ENCODE measurements at regions of chr10 and their contacts with region 1.

Region 1: DNA sequence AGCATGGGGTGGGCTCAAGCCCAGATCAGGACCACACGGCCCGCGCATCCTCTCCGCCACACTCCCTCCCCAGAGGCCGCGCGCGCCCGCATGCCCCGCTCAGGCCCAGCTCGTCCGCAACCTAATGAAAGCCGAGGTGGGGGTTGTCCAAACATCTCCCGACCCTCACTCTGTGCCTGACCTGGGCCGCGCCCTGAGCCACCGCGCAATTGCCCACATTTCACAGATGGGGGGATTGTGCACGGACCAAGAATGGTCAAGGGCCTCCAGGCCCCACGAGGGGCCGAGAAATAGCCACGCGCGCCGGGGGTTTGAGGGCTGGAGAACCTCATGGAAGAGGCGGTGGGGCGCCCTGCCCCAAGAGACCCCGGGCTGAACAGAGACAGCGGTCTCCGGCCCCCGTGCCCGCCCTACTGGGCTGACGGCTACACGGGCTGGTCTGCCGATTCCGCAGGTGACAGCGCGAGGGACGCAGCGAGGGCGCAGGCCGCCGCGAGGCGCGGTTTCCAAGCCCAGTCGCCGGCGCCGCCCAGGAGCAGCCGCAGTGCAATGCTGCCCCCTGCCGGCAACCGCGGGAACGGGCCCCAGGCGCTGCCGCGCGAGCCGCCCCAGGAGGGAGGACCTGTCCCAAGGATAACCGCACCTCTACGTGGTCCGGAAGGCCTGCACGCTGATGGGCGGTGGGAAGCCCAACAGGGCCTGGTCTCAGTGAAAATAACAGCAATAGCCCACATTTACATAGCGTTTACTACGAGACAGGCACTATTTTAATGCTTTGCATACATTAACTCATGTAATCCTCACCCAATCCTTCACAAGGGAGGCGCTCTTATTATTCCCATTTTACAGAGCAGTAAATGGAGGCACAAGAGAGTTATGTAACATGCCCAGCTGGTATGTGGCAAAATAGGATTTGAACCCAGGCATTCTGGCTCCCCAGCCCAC is 10.5 kb upstream of the GRID1 start:
- DNase-seq: peak; percentile 63 to 90 (median 70)
- ATAC-seq: peak; percentile 37 to 92 (median 86)
- H3K4me3 ChIP-seq: peak overlapping the region in 8 of 12 donors; percentile 9 to 47 (median 31)
- H3K27ac ChIP-seq: no peak overlapping the region
- H3K4me1 ChIP-seq: peaks cover 0 to 8% (median 4%) of the 10 kb centered on the region in 12 donors
- H3K27me3 ChIP-seq: peaks cover 0 to 67% (median 19%) of the 10 kb centered on the region in 9 donors
- CTCF ChIP-seq: peak; percentile 96 to 100 (median 100)
- POLR2A ChIP-seq: no peak

Region 2: GRCh38 chr10:84613336-84614021 is 1763.6 kb before region 1 on chr10:
- intact Hi-C with region 1: loop called in 1 of 10 experiments (anchors 5 kb)
- DNase-seq: peak in 2 of 5 donors; percentile 18 to 36
- ATAC-seq: peak; percentile 71 to 90 (median 88)
- H3K4me3 ChIP-seq: no peak overlapping the region
- H3K27ac ChIP-seq: no peak overlapping the region
- H3K4me1 ChIP-seq: peaks cover 0 to 5% (median 0%) of the 10 kb centered on the region in 12 donors
- H3K27me3 ChIP-seq: peaks cover 0 to 9% (median 0%) of the 10 kb centered on the region in 9 donors
- CTCF ChIP-seq: peak in 10 of 12 donors; percentile 23 to 59 (median 42)
- POLR2A ChIP-seq: no peak

Region 3: DNA sequence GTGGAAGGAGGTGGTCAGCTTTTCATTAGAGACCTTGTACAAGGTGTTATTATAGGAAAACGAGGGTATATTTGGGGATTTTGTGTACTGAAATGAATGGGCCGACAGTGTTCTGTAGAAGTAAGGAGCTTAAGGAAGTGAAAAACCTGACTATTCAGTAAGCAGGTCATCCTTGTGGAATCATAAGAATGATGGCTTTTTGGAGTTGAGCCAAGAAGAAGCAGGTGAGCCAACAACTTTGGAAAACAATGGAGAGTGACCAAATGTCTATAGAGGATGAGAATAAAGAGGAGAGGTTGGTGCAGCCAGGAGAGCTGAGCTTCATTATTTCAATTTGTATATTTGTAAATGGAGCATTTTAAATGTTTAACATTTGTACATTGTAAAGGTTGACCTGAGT is 1453.0 kb before region 1 on chr10:
- intact Hi-C with region 1: loop called in 2 of 10 experiments (anchors 5 to 10 kb)
- DNase-seq: no peak
- ATAC-seq: no peak
- H3K4me3 ChIP-seq: no peak overlapping the region
- H3K27ac ChIP-seq: no peak overlapping the region
- H3K4me1 ChIP-seq: no peaks in the 10 kb centered on the region
- H3K27me3 ChIP-seq: no peaks in the 10 kb centered on the region
- CTCF ChIP-seq: no peak
- POLR2A ChIP-seq: no peak

Region 4: DNA sequence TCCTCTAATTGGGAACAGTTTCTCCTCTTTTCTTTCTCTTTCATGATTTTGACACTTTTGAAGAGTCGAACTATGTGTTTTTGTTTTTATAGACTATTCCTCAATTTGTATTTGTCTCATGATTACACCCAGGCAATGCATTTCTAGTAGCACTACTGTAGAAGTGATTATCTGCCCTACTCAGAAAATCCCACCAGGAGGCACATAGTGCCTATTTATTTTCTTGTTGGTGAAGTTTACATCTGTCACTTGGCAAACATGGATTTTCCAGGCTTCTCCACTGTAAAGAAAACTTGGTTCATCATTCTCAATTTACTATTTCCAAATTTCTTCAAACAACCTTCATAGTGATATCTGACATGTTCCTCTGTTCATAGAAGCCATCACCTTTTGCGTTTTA is 1154.8 kb before region 1 on chr10:
- intact Hi-C with region 1: loop called in 1 of 10 experiments (anchors 5 kb)
- DNase-seq: no peak
- ATAC-seq: no peak
- H3K4me3 ChIP-seq: no peak overlapping the region
- H3K27ac ChIP-seq: no peak overlapping the region
- H3K4me1 ChIP-seq: no peaks in the 10 kb centered on the region
- H3K27me3 ChIP-seq: no peaks in the 10 kb centered on the region
- CTCF ChIP-seq: peak in 2 of 12 donors; percentile 8 to 24
- POLR2A ChIP-seq: no peak

Region 5: DNA sequence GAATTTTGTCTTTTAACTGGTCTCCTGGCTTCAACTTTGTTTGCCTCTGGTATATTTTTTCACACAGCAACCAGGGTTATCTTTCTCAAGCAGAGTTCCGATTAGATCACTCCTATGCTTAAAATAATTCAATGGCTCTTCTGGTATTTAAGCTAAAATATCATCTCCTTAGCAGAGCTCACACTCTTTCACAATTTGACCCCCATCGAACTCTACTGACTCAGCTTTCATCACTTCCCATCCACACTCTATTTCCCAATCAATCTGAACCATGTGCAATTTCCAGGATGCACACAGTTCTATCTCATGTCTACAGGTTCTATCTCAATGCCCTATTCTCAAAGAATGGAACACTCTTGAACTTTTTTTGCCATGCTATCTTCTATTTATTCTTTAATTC is 820.0 kb before region 1 on chr10:
- intact Hi-C with region 1: loop called in 3 of 10 experiments (anchors 5 to 10 kb)
- DNase-seq: no peak
- ATAC-seq: no peak
- H3K4me3 ChIP-seq: no peak overlapping the region
- H3K27ac ChIP-seq: no peak overlapping the region
- H3K4me1 ChIP-seq: no peaks in the 10 kb centered on the region
- H3K27me3 ChIP-seq: no peaks in the 10 kb centered on the region
- CTCF ChIP-seq: no peak
- POLR2A ChIP-seq: no peak

Region 6: GRCh38 chr10:85791818-85792532 is 585.1 kb before region 1 on chr10:
- intact Hi-C with region 1: loop called in 8 of 10 experiments (anchors 2 to 10 kb)
- DNase-seq: no peak
- ATAC-seq: peak in 2 of 4 donors; percentile 13 to 25
- H3K4me3 ChIP-seq: no peak overlapping the region
- H3K27ac ChIP-seq: no peak overlapping the region
- H3K4me1 ChIP-seq: peaks cover 0 to 9% (median 2%) of the 10 kb centered on the region in 12 donors
- H3K27me3 ChIP-seq: no peaks in the 10 kb centered on the region
- CTCF ChIP-seq: peak in 10 of 12 donors; percentile 14 to 57 (median 32)
- POLR2A ChIP-seq: no peak

Region 7: DNA sequence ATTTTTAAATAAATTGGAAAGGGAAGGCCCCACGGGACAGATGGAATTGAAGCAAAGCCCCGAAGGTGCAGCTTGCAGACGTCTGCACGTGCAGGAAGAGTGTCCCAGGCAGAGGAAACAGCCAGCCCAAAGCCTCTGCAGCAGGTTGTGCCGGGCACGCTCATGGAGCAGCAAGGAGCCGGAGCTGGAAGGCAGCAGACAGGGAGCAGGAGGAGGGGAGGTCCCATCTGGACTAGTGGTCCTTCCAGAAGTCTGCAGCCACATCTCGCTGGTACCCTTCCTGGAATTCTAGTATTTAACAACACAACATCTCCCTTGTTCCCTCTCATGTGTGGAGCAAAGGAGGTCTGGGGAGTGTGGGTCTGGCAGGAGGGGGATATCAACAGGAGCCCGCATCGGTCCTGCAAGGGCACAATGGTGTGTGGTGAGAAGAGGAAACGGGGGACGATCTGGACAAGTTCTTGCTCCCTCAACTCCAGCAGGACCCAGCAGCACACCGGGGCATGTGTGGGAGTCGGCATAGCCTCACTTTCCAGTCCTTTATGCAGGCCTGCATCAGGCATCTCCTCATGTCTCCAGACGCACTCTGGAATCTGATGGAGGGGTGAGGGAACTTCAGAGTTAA is 179.8 kb before region 1 on chr10:
- intact Hi-C with region 1: no loop called
- DNase-seq: no peak
- ATAC-seq: no peak
- H3K4me3 ChIP-seq: no peak overlapping the region
- H3K27ac ChIP-seq: no peak overlapping the region
- H3K4me1 ChIP-seq: no peaks in the 10 kb centered on the region
- H3K27me3 ChIP-seq: no peaks in the 10 kb centered on the region
- CTCF ChIP-seq: no peak
- POLR2A ChIP-seq: no peak

Region 8: GRCh38 chr10:86261941-86262687 is 115.0 kb before region 1 on chr10:
- intact Hi-C with region 1: loop called in 1 of 10 experiments (anchors 5 kb)
- DNase-seq: no peak
- ATAC-seq: peak; percentile 10 to 59 (median 34)
- H3K4me3 ChIP-seq: no peak overlapping the region
- H3K27ac ChIP-seq: no peak overlapping the region
- H3K4me1 ChIP-seq: peaks cover 0 to 4% (median 0%) of the 10 kb centered on the region in 12 donors
- H3K27me3 ChIP-seq: peaks cover 0 to 16% (median 0%) of the 10 kb centered on the region in 9 donors
- CTCF ChIP-seq: peak in 4 of 12 donors; percentile 19 to 30 (median 24)
- POLR2A ChIP-seq: no peak

Region 9: DNA sequence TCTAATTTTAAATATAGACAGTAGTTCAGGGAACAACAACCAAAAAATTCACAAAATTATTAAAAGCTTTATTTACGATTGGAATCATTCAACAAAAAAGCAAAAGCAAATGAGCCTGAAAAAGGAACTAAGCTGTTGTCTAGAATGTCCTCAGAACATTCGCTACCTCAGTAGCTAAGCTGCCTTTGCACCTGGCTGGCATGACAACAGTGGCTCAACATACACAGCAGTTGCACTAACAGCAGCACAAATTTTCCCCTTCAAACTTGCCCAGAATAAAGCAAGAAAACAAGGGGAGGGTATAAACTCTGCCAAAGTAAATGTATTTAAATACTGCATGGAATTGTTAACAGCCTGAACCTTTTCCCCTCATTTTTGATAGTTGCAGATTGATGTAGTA is 59.8 kb after region 1 on chr10:
- intact Hi-C with region 1: no loop called
- DNase-seq: no peak
- ATAC-seq: no peak
- H3K4me3 ChIP-seq: no peak overlapping the region
- H3K27ac ChIP-seq: no peak overlapping the region
- H3K4me1 ChIP-seq: peaks cover 0 to 25% (median 0%) of the 10 kb centered on the region in 12 donors
- H3K27me3 ChIP-seq: no peaks in the 10 kb centered on the region
- CTCF ChIP-seq: no peak
- POLR2A ChIP-seq: no peak

Measured in heart left ventricle (tissue), 16 donors.